Colonic mucosa (tissue), 4 donors: ENCODE measurements at regions of chr3 and their contacts with region 1.

Region 1: DNA sequence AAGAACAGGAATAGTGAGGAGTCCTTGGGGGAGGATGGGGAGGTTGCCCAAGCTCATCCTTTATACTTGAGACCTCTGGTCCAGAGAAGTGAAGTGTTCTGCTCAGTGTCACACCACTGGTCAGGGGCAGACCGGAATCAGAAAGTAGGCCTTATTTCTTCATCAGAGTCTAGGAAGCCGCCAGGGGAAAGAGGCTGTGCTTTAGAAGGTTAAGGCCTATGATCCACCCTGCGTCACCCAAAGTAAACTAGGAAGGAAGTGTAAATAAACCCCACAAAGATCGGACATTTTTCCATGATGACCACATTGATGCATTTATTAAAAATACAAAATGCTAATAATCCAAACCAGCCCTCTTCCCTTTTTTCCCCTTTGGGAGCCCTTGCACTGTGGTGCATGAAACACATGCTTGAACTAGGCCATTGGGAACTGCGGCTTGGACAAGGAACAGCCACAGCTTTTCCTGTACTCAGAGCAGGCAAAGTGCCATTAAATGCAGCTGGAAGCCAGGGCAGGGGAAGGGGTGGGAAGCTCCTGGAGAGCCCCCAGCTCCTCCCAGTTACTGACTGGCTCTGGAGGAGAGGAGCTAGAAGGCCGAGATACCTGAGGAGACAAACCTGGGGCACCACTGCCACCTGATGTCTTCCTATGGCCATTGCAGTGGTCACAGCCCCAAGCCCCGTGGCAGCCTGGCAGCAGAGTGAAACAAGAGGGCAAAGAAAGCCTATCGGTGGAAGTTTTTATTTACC is 37.0 kb downstream of the CDC25A start:
- DNase-seq: peak; percentile 74
- H3K4me3 ChIP-seq: no peak overlapping the region
- H3K27ac ChIP-seq: no peak overlapping the region
- H3K4me1 ChIP-seq: no peaks in the 10 kb centered on the region
- H3K27me3 ChIP-seq: no peaks in the 10 kb centered on the region
- CTCF ChIP-seq: peak; percentile 80

Region 2: DNA sequence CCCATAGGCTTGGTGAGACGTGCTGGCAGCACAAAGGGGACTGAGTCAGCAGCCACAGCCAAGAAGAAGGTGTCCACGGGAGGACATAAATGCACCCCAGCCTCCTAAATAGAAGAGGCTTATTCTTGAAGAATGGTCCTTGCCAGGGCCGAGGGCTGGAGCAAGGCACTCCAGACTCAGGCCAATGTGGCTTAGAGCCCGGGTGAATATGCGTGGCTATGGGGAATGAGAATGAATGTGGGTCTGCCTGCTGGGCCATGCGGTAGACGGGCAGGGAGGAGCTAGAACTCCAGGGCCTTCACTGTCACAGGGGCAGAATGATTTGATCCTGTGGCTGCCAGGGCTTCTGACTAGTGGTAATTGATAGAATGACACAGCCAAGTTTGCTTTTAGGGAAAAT is 314.2 kb before region 1 on chr3:
- intact Hi-C with region 1: loop called (anchors 5 kb)
- DNase-seq: no peak
- H3K4me3 ChIP-seq: no peak overlapping the region
- H3K27ac ChIP-seq: no peak overlapping the region
- H3K4me1 ChIP-seq: no peaks in the 10 kb centered on the region
- H3K27me3 ChIP-seq: no peaks in the 10 kb centered on the region
- CTCF ChIP-seq: no peak